ENCODE measurements at regions of chr22 and their contacts with region 1.

Region 1: GRCh38 chr22:27804470-27805297 is 3.1 kb upstream of the MN1 start:
- DNase-seq: peak; percentile 12
- ATAC-seq: peak; percentile 72
- H3K4me3 ChIP-seq: no peak overlapping the region
- H3K27ac ChIP-seq: no peak overlapping the region
- H3K4me1 ChIP-seq: 0 out of 2 replicates have a peak, but pooled peaks cover 4% of the 10 kb centered on the region
- H3K27me3 ChIP-seq: no peaks in the 10 kb centered on the region
- CTCF ChIP-seq: peak; percentile 79

Region 2: GRCh38 chr22:27405672-27406388 is 398.9 kb before region 1 on chr22:
- CTCF ChIA-PET with region 1: no interaction called
- POLR2A ChIA-PET with region 1: no interaction called
- in situ Hi-C with region 1: no loop called
- intact Hi-C with region 1: loop called (anchors 5 kb)
- DNase-seq: no peak
- ATAC-seq: peak; percentile 93
- H3K4me3 ChIP-seq: no peak overlapping the region
- H3K27ac ChIP-seq: no peak overlapping the region
- H3K4me1 ChIP-seq: no peaks in the 10 kb centered on the region
- H3K27me3 ChIP-seq: no peaks in the 10 kb centered on the region
- CTCF ChIP-seq: peak; percentile 82

Region 3: DNA sequence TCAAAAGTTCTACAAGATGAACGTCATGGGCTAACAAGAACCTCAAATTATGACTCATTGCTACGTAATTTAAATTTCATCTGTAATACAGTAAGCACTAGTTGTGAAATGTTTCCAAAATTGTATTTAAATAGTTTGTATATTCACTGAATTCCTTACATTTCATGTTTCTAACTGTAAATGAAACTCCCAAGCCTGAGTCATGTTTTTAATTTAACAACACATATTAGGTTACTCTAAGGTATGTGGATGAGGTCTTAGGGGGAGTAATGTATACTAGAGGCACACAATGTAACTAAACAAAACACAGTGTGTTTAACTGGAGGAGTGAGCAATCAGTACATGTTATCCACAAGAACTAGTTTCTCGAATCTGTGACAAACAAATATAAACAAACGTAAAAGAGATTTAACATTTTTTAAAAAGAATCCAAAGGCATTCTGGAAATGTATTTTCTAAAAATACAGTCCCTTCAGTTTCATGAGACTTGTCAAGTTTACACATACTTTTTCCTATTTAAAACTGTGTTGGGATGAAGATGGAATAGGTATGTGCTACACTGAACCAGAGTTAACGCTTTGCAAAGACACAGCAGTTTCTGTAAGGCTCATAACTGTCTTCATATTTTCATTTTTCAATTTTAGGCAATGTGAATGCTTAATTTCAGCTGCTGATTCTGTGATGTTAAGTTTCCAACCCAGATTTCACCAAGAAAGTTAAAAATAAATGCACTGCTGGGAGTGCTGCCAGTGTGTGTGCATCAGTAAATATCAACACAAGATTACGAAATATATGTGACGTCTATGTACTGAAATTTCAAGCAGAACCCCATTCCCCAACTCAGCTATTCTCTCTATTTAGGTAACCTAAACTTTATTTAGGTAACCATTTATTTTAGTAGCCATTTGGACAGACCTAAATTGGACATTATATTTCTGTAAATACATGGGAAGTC is 61.7 kb after region 1 on chr22:
- CTCF ChIA-PET with region 1: no interaction called
- POLR2A ChIA-PET with region 1: no interaction called
- in situ Hi-C with region 1: no loop called
- intact Hi-C with region 1: no loop called
- DNase-seq: no peak
- ATAC-seq: no peak
- H3K4me3 ChIP-seq: no peak overlapping the region
- H3K27ac ChIP-seq: no peak overlapping the region
- H3K4me1 ChIP-seq: peaks cover 4% of the 10 kb centered on the region
- H3K27me3 ChIP-seq: no peaks in the 10 kb centered on the region
- CTCF ChIP-seq: no peak

Region 4: DNA sequence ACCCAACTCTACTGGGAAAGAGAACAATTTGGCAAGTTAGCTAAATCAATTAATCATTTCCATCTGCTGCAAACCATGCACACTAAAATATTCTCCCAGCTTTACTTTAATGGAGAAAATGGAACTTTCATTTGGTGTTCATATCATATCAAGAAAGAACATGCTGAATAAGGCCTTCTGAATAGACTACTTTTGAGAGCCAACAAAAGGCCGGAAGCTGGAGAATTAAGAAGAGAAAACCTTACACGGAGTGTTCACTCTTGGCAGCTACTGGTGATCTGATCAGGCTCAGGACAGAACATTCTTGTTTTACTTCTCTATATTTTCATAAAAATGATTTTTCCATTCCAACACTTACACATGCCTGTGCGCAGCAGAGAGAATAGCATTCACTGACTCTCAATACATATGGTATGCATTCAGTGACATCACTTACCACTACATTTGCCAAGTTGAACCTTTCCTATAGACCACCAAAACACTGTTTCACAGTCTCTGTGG is 709.7 kb after region 1 on chr22:
- CTCF ChIA-PET with region 1: no interaction called
- POLR2A ChIA-PET with region 1: no interaction called
- in situ Hi-C with region 1: no loop called
- intact Hi-C with region 1: no loop called
- DNase-seq: no peak
- ATAC-seq: no peak
- H3K4me3 ChIP-seq: no peak overlapping the region
- H3K27ac ChIP-seq: no peak overlapping the region
- H3K4me1 ChIP-seq: no peaks in the 10 kb centered on the region
- H3K27me3 ChIP-seq: no peaks in the 10 kb centered on the region
- CTCF ChIP-seq: no peak